ENCODE measurements at regions of chr3 and their contacts with region 1.

Region 1: DNA sequence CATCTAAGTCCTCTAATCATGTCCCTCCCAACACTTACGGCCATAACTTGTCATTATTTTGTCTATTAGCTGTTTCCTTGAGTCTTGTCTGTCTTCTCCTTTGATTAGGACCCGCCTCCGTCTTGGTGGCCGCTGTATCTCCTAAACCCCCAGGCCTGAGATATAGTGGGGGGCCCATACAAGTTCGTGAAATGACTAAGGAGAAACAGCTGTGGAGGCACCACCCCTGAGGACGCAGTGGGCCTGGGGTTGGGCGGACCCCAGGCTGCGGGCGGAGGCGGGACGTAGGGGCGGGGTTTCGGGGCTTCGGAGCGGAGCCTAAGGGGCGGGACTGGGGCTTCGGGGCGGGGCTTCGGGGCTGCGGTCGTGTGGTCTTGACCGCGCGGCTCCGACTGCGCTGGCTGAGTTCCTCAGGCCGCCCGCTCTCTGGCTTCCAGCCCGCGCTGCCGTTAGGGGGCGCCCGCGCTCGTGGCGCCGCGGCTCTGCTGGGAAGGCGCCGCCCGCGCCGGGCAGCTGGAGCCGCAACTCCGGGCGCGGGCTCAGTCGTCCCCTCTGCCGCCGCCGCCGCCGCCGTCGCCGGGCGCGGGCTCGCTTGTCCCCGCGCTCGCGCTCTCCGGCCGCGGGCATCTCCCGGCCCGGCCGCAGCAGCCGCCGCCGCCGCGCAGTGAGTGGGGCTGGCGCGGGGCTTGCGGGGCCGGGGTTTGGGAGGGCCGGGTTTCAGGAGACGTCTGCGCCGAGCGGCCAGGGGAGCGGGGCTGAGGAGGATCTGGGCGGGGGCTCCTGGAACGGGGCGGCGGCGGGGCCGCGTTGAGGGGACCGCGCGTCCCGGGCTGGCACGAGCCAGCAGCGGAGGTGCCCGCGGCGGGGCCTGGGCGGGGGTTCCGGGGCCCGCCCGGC is at the start of gene KCTD6:
- DNase-seq: peak; percentile 94 to 98
- H3K4me3 ChIP-seq: peak within 1 kb of the TSS; percentile 72 to 88 (median 87)
- H3K27ac ChIP-seq: peak within 1 kb of the TSS; percentile 80 to 93 (median 89)
- H3K4me1 ChIP-seq: peaks cover 17 to 63% (median 36%) of the 10 kb centered on the region in 4 donors
- H3K27me3 ChIP-seq: no peaks in the 10 kb centered on the region
- CTCF ChIP-seq: peak in 5 of 7 experiments; percentile 12 to 88 (median 56)
- EP300 ChIP-seq: no peak
- POLR2A ChIP-seq: no peak
- total RNA-seq, gene KCTD6: 5.4 to 16.7 (median 12.3) TPM in 3 of 5 donors, not detected in the others

Region 2: DNA sequence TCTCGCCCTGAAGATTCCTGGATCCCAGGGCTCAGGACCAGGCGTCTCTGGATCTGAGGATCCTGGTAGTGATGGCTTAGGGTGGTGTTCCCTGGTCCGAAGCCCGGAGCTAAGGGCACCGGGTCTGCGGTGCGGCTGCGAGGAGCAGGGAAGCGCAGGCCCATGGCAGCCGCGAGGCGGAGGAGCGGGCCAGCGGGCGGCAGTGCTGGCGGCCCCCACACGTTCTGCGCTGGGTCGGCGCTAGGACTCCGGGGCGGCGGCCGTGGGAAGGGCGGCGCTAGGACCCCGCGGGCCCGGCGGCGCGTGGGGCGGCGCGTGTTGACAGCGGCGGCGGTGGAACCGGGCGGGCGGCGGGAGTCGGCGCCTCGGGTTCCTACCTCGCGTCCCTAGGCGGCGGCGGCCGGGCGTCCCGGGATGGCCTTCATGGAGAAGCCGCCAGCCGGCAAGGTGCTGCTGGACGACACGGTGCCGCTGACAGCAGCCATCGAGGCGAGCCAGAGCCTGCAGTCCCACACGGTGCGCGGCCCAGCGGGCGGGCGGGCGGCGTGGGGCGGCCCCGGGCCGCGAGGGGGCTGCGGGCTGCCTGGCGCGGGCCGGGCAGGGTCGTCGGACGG is 159.1 kb before region 1 on chr3 and contains the start of gene PXK:
- intact Hi-C with region 1: loop called (anchors 10 kb)
- DNase-seq: peak; percentile 87 to 95
- H3K4me3 ChIP-seq: peak within 1 kb of the TSS; percentile 83 to 97 (median 92)
- H3K27ac ChIP-seq: peak within 1 kb of the TSS; percentile 71 to 86 (median 85)
- H3K4me1 ChIP-seq: peaks cover 10 to 51% (median 32%) of the 10 kb centered on the region in 4 donors
- H3K27me3 ChIP-seq: no peaks in the 10 kb centered on the region
- CTCF ChIP-seq: no peak
- EP300 ChIP-seq: no peak
- POLR2A ChIP-seq: no peak
- total RNA-seq, gene PXK: 16.7 to 54.0 (median 38.8) TPM

Region 3: DNA sequence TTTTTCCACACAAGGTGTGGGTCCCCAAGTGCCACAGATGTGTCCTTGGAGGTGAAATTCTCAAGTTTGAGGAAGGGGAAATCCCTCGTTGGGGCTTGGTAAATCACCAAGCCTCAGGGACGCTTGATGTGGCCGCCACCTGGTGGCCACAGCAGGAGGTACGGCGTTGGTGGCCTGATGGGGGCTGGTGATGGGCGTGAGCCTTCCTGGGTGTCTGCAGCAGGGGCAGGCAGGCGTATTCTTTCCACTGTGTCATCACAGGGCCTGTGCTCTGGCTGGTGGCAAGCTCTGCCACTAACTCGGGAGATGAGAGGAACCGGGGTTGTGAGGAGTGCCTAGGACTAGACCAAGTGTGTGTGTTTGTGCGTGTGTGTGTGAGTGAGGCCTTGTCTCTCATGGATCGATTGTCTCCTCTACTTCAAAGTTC is 41.1 kb after region 1 on chr3:
- intact Hi-C with region 1: loop called (anchors 5 kb)
- DNase-seq: peak; percentile 78 to 91
- H3K4me3 ChIP-seq: no peak overlapping the region
- H3K27ac ChIP-seq: no peak overlapping the region
- H3K4me1 ChIP-seq: peaks cover 26 to 48% (median 41%) of the 10 kb centered on the region in 4 donors
- H3K27me3 ChIP-seq: no peaks in the 10 kb centered on the region
- CTCF ChIP-seq: peak in 6 of 7 experiments; percentile 18 to 93 (median 90)
- EP300 ChIP-seq: no peak
- POLR2A ChIP-seq: no peak

Measured in stomach (tissue), 19 donors.